PC-9 (cell line): ENCODE measurements at regions of chr10 and their contacts with region 1.

Region 1: DNA sequence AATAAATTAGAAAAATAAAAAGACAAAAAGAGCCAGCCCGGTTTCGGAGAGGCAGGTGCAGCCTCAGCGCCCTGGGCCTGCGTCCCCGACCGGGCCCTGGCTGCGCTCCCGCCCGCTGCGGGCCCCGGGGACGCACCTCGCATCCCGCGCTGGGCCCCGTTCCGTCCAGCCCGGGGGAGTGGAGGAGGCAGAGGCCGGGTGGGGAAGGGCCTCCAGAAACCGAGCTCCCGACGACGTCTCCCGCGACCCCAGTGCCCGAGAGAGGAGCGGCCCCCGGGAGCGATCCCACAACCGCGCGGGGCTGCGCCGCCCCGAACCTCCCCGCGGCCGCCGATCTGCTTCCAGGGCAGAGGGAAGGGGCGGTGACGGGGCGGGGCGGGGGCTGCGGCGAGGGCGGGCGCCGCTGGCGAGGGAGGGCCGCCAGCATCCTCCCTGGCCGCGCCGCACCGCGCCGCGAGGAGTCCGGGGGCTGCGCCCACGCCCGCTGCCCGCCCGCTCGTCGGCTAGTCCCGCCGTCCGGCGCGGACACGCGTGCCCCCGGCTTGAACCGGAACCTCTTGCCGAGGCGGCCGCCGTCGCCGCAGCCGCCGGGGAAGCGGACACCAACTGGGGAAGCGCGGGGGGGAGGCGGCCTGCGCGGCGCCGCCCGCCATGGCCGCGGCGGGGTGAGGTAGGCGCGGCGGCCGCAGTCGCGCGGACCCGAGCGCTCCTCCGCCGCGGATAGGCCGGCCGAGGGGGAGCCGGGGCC is at the start of gene CCNY:
- DNase-seq: peak in 1 of 2 experiments; percentile 67
- H3K4me3 ChIP-seq: peak within 1 kb of the TSS; percentile 82
- H3K27ac ChIP-seq: peak within 1 kb of the TSS; percentile 39
- H3K4me1 ChIP-seq: peaks cover 42% of the 10 kb centered on the region
- H3K27me3 ChIP-seq: no peaks in the 10 kb centered on the region
- CTCF ChIP-seq: no peak
- total RNA-seq, gene CCNY: 54.9 and 69.5 TPM in 2 replicates

Region 2: GRCh38 chr10:35306852-35307256 is 29.4 kb before region 1 on chr10:
- CTCF ChIA-PET with region 1: no interaction called
- POLR2A ChIA-PET with region 1: interaction called, 4 read pairs
- intact Hi-C with region 1: loop called (anchors 2 kb)
- DNase-seq: peak; percentile 92 to 95
- H3K4me3 ChIP-seq: peak overlapping the region; percentile 27; the same call in 1 of the 2 replicates
- H3K27ac ChIP-seq: peak overlapping the region; percentile 91
- H3K4me1 ChIP-seq: peaks cover 16% of the 10 kb centered on the region
- H3K27me3 ChIP-seq: no peaks in the 10 kb centered on the region
- CTCF ChIP-seq: no peak

Region 3: GRCh38 chr10:35409094-35409582 is 72.9 kb after region 1 on chr10:
- CTCF ChIA-PET with region 1: no interaction called
- POLR2A ChIA-PET with region 1: no interaction called
- intact Hi-C with region 1: loop called (anchors 1 kb)
- DNase-seq: peak in 1 of 2 experiments; percentile 30
- H3K4me3 ChIP-seq: no peak overlapping the region
- H3K27ac ChIP-seq: no peak overlapping the region
- H3K4me1 ChIP-seq: peaks cover 26% of the 10 kb centered on the region
- H3K27me3 ChIP-seq: no peaks in the 10 kb centered on the region
- CTCF ChIP-seq: no peak

Region 4: GRCh38 chr10:35493196-35494118 is 157.2 kb after region 1 on chr10:
- CTCF ChIA-PET with region 1: no interaction called
- POLR2A ChIA-PET with region 1: no interaction called
- intact Hi-C with region 1: loop called (anchors 5 kb)
- DNase-seq: peak; percentile 45 to 49
- H3K4me3 ChIP-seq: no peak overlapping the region
- H3K27ac ChIP-seq: no peak overlapping the region
- H3K4me1 ChIP-seq: peaks cover 29% of the 10 kb centered on the region
- H3K27me3 ChIP-seq: no peaks in the 10 kb centered on the region
- CTCF ChIP-seq: no peak

Region 5: GRCh38 chr10:35563261-35563891 is 227.1 kb after region 1 on chr10:
- CTCF ChIA-PET with region 1: no interaction called
- POLR2A ChIA-PET with region 1: no interaction called
- intact Hi-C with region 1: loop called (anchors 2 kb)
- DNase-seq: peak in 1 of 2 experiments; percentile 52
- H3K4me3 ChIP-seq: no peak overlapping the region
- H3K27ac ChIP-seq: no peak overlapping the region
- H3K4me1 ChIP-seq: no peaks in the 10 kb centered on the region
- H3K27me3 ChIP-seq: no peaks in the 10 kb centered on the region
- CTCF ChIP-seq: peak; percentile 97